ENCODE measurements at regions of chr3 and their contacts with region 1.

Region 1: DNA sequence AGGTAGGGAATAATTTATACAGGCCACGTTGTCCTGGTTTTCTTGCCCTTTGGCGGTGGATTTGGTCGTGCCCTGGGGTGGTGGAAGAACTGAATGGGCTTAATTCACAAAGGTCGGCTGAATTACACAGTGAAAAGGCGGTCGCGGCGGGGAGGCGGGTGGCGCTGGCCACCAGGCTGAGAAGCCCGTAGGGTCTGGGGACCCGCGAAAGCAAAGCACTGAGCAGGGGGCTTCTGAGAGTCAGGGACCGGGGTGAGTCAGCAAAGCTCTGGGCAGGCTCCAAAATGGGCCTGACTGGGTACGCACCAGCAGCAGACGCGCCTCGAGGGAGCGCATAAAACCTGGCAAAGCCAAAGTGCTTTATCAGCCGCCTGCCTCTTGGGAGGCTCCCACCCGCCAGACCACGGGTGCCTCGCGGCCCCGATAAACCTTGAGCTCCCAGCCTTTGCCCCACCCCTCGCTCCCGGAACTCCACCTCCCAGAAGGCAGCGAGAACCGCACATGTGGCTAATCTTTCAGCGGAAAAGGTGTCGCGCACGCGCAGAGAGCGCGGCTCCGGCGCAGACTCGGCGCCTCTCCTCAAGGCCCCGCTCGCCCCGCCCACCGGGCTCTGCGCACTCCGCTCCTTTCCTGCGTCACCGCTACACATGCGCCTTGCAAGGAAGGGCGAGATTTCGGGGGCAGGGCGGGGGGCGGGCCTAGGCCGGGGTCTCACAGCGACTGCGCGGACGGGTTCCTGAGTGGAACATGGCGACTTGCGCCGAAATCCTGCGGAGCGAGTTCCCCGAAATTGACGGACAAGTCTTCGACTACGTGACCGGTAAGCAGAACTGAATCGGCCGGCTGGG is at the start of gene ABCF3:
- DNase-seq: peak; percentile 100
- H3K4me3 ChIP-seq: peak within 1 kb of the TSS; percentile 82 to 96 (median 86)
- H3K27ac ChIP-seq: peak within 1 kb of the TSS; percentile 65 to 91 (median 84)
- H3K4me1 ChIP-seq: peaks cover 13 to 50% (median 34%) of the 10 kb centered on the region in 6 donors
- H3K27me3 ChIP-seq: no peaks in the 10 kb centered on the region
- CTCF ChIP-seq: no peak
- POLR2A ChIP-seq: peak in 2 of 3 donors; percentile 69 to 84
- total RNA-seq, gene ABCF3: 46.4 to 90.7 (median 69.8) TPM

Region 2: DNA sequence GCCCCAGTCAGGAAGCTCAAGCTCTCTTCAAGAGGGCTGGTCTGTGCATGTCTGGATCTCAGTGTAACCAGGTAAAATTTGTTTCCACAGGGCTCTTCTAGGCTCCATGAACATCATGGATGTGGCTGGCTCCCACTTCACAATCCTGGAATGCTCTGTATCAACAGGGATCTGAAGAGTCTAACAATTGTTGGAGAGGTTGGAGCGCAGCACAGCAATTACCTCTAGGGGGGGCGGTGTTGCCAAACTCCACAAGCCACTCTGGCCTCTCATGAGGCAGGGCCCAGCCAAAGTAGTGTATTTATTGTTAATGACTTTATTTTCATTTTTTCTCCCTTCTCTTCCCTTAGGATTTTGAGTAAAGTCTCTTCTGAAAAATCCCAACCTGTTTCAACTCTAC is 56.7 kb before region 1 on chr3:
- intact Hi-C with region 1: no loop called
- DNase-seq: no peak
- H3K4me3 ChIP-seq: no peak overlapping the region
- H3K27ac ChIP-seq: no peak overlapping the region
- H3K4me1 ChIP-seq: peaks cover 0 to 10% (median 5%) of the 10 kb centered on the region in 6 donors
- H3K27me3 ChIP-seq: no peaks in the 10 kb centered on the region
- CTCF ChIP-seq: peak in 1 of 11 experiments; percentile 14
- POLR2A ChIP-seq: no peak

Region 3: DNA sequence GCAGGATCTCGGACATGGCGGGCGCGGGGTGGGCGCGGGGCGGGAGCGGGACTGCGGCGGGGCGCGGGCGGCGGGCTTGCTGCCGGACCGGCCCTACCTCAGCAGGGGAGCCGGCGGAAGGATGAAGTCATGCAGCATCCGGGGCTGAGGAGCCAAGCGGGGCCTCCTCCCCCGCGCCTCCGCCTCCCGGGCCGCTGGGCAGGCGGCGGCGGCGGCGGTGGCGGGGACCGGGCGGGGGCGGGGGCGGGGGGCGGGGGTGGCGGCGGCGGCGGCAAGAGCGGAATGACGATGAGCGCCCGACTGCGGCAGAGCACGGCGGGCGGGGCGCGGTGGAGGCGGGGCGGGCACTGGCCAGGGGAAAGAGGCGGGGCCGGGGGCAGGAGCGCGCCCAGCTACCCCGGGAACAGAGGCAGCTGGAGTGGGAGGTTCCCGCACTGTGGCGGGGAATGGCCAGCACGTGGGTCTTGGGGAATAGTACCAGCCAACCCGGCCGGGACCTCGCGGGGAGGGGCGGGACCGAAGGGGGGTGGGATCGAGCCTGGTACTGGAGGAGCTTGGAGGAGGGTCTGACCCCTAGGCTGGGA is 75.7 kb after region 1 on chr3 and contains the start of gene CAMK2N2:
- intact Hi-C with region 1: no loop called
- DNase-seq: peak; percentile 85
- H3K4me3 ChIP-seq: peak within 1 kb of the TSS; percentile 34 to 75 (median 54)
- H3K27ac ChIP-seq: peak within 1 kb of the TSS in 2 of 8 donors; percentile 13 to 24
- H3K4me1 ChIP-seq: peaks cover 17 to 39% (median 32%) of the 10 kb centered on the region in 6 donors
- H3K27me3 ChIP-seq: peaks cover 3 to 82% (median 55%) of the 10 kb centered on the region in 7 donors
- CTCF ChIP-seq: no peak
- POLR2A ChIP-seq: no peak
- total RNA-seq, gene CAMK2N2: 0.35 TPM in 1 of 7 donors, not detected in the others

Region 4: DNA sequence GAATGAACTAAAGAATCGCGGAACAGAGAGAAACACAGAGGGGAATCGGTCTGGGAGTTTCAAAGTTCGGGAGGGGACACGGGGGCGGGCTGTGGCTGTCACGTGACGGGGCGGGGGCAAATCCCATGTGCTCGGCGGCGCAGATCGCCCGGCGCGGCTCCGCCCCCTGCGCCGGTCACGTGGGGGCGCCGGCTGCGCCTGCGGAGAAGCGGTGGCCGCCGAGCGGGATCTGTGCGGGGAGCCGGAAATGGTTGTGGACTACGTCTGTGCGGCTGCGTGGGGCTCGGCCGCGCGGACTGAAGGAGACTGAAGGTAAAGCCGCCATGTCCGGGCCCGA is 128.6 kb after region 1 on chr3 and contains the start of gene EIF4G1:
- intact Hi-C with region 1: loop called (anchors 10 kb)
- DNase-seq: peak; percentile 98
- H3K4me3 ChIP-seq: peak within 1 kb of the TSS; percentile 62 to 91 (median 72)
- H3K27ac ChIP-seq: peak within 1 kb of the TSS; percentile 79 to 99 (median 95)
- H3K4me1 ChIP-seq: peaks cover 20 to 52% (median 48%) of the 10 kb centered on the region in 6 donors
- H3K27me3 ChIP-seq: no peaks in the 10 kb centered on the region
- CTCF ChIP-seq: peak in 1 of 11 experiments; percentile 15
- POLR2A ChIP-seq: peak in 1 of 3 donors; percentile 52
- total RNA-seq, gene EIF4G1: 191 to 294 (median 247) TPM

Measured in spleen (tissue), 13 donors.